Breast epithelium (tissue), 4 donors: ENCODE measurements at regions of chr15 and their contacts with region 1.

Region 1: DNA sequence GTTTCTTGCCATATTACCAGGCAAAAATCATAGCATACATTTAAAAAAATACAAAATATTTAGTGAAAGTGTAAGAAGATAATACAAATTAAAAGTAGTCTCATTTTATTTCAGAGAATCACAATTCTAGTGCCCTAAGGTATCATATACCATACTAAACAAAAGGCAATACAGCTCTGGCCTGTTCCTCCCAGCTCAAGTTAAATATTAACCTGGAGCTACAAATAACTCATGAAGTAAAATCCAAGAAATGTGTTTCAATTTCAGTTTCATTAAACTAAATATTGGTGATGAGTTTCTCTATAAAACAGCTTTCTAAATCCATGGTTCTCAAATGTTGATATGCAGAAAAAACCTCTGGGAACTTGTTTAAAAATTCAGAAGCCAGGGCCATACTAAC is 67.7 kb downstream of the INO80 start:
- DNase-seq: no peak
- H3K4me3 ChIP-seq: no peak overlapping the region
- H3K27ac ChIP-seq: no peak overlapping the region
- H3K4me1 ChIP-seq: no peaks in the 10 kb centered on the region
- H3K27me3 ChIP-seq: no peaks in the 10 kb centered on the region
- CTCF ChIP-seq: no peak
- POLR2A ChIP-seq: no peak

Region 2: DNA sequence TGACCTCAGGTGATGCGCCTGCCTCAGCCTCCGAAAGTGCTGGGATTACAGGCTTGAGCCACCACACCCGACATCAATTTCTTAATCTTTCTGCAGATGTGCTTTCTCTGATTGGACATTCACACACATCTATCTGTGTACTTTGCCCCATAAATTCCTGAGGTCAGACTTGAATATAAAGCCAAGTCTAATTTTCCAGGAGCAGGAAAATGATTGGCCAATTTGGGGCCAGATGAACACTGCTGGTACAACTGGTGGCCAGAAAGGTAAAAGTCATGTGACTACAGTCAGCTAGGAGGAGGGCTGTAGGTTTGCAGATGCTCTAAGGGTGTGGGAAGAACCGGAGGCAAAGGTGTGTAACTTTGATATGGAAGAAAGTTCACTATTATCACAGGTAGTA is 356.7 kb before region 1 on chr15:
- intact Hi-C with region 1: no loop called
- DNase-seq: no peak
- H3K4me3 ChIP-seq: no peak overlapping the region
- H3K27ac ChIP-seq: no peak overlapping the region
- H3K4me1 ChIP-seq: peaks cover 5 to 7% of the 10 kb centered on the region in 2 donors
- H3K27me3 ChIP-seq: no peaks in the 10 kb centered on the region
- CTCF ChIP-seq: no peak
- POLR2A ChIP-seq: no peak

Region 3: DNA sequence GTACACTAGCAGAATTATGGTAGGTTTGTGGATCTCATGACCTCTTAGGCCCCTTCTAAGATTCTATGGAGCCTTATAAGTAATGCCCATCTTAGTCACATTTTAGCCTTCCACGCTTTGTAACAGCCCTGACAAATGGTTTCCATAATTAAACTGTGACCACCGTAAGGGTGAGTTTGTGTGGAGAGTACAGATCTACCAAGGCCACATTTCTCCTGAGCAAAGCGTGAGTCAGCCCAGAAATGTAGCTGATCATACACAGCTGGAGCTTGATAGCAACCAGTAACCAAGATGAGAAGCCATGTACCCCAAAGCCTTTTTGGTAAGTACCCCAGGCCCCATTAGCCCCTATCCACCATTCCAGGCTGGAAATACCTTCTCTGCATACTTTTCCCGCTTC is 63.4 kb before region 1 on chr15:
- intact Hi-C with region 1: loop called (anchors 2 kb)
- DNase-seq: no peak
- H3K4me3 ChIP-seq: no peak overlapping the region
- H3K27ac ChIP-seq: no peak overlapping the region
- H3K4me1 ChIP-seq: no peaks in the 10 kb centered on the region
- H3K27me3 ChIP-seq: no peaks in the 10 kb centered on the region
- CTCF ChIP-seq: no peak
- POLR2A ChIP-seq: no peak

Region 4: GRCh38 chr15:41079717-41080116 is 31.3 kb after region 1 on chr15:
- intact Hi-C with region 1: no loop called
- DNase-seq: no peak
- H3K4me3 ChIP-seq: no peak overlapping the region
- H3K27ac ChIP-seq: no peak overlapping the region
- H3K4me1 ChIP-seq: no peaks in the 10 kb centered on the region
- H3K27me3 ChIP-seq: no peaks in the 10 kb centered on the region
- CTCF ChIP-seq: no peak
- POLR2A ChIP-seq: no peak